Colonic mucosa (tissue), 4 donors: ENCODE measurements at regions of chr1 and their contacts with region 1.

Region 1: GRCh38 chr1:153946622-153947241 is at the start of gene DENND4B:
- DNase-seq: peak; percentile 85
- H3K4me3 ChIP-seq: peak within 1 kb of the TSS; percentile 93
- H3K27ac ChIP-seq: peak within 1 kb of the TSS; percentile 96
- H3K4me1 ChIP-seq: peaks cover 9% of the 10 kb centered on the region
- H3K27me3 ChIP-seq: no peaks in the 10 kb centered on the region
- CTCF ChIP-seq: peak; percentile 93
- total RNA-seq, gene DENND4B: 26.9 to 45.6 TPM

Region 2: GRCh38 chr1:153816283-153816889 is 130.3 kb before region 1 on chr1:
- intact Hi-C with region 1: loop called (anchors 2 kb)
- DNase-seq: no peak
- H3K4me3 ChIP-seq: no peak overlapping the region
- H3K27ac ChIP-seq: no peak overlapping the region
- H3K4me1 ChIP-seq: no peaks in the 10 kb centered on the region
- H3K27me3 ChIP-seq: no peaks in the 10 kb centered on the region
- CTCF ChIP-seq: no peak

Region 3: DNA sequence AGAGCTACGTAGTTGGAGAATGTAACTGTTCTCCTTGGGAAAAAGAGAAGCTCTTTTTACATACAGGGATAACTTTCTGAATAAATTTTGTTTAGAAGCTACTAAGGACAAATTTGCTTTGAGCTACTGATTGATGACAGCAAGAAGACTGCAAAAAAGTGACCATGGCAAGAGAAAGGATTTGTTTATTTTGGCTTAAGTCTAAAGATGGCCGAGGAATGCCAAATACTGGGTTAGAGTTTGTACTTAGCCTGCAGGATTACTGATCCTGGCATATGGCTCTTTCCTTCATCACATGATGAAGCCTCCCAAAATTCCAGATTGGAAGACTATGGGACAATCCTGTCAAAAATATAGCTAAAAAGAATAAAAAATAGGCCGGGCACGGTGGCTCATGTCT is 72.5 kb after region 1 on chr1:
- intact Hi-C with region 1: no loop called
- DNase-seq: no peak
- H3K4me3 ChIP-seq: no peak overlapping the region
- H3K27ac ChIP-seq: no peak overlapping the region
- H3K4me1 ChIP-seq: no peaks in the 10 kb centered on the region
- H3K27me3 ChIP-seq: no peaks in the 10 kb centered on the region
- CTCF ChIP-seq: no peak